RWPE1 (cell line): ENCODE measurements at regions of chr9 and their contacts with region 1.

Region 1: GRCh38 chr9:21789541-21790037 is 12.8 kb upstream of the MTAP start:
- DNase-seq: peak; percentile 82
- H3K27ac ChIP-seq: no peak overlapping the region
- CTCF ChIP-seq: peak; percentile 98

Region 2: GRCh38 chr9:21434202-21435014 is 355.2 kb before region 1 on chr9:
- CTCF ChIA-PET with region 1: interaction called, 11 read pairs
- POLR2A ChIA-PET with region 1: no interaction called
- DNase-seq: peak; percentile 38
- H3K27ac ChIP-seq: no peak overlapping the region
- CTCF ChIP-seq: peak; percentile 83

Region 3: DNA sequence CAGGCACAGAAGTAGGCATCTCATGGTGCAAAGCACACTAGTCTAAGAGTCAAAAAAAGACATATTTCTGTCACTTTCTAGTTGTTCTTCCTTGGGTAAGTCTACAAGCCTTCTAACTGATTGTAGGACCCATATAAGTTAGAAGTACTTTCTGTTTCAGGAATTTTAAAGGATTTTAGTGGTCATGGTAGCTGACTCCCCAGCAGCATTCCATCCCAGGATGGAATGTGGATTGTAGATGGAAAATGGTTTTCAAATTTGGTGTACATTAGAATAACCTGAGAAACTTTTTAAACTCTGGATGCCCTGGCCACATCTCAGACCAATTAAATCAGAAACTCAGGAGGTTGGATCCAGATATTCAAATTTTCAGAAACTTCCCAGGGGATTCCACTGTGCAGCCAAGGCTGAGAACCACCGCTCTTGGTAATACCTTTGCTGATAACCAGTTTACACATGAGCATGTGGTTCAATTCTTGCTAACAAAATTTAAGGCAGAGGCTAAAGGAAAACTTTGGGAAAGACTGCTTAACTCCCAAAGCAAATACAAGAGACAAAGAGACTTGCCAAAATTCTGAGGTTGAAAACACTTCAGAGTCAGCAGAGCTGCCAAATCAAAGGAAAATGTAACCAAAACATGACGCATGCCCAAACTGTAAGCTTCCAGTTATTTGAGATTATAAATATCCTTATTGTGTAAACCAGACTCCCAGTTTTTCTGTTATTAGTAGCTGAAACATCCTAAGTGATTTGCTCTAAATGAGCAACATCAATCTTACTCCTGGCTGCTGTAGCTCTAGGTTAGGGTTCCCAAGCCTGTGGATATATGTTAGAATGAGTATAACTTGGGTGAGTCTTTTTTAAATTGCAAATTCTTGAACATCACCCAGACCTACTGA is 132.6 kb before region 1 on chr9:
- CTCF ChIA-PET with region 1: no interaction called
- POLR2A ChIA-PET with region 1: no interaction called
- DNase-seq: no peak
- H3K27ac ChIP-seq: no peak overlapping the region
- CTCF ChIP-seq: no peak

Region 4: DNA sequence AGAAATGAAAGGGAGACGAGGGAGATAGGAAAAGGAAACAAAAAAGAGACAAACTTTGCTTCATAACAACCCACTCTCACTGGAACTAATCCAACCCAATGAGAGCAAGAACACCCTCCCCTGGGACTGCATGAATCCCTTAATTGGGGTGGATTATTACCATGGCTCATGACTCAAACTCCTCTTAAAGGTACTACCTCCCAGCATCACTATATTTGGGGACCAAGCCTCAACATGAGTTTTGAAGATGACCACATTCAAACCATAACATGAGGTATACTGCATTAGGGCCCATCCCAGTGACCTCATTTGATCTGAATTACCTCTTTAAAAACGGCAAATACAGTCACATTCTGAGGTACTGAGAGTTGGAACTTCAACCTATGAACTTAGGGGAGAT is 20.8 kb after region 1 on chr9:
- CTCF ChIA-PET with region 1: no interaction called
- POLR2A ChIA-PET with region 1: no interaction called
- DNase-seq: peak; percentile 25
- H3K27ac ChIP-seq: peak overlapping the region; percentile 77
- CTCF ChIP-seq: no peak

Region 5: GRCh38 chr9:21862871-21863270 is 73.3 kb after region 1 on chr9:
- CTCF ChIA-PET with region 1: no interaction called
- POLR2A ChIA-PET with region 1: no interaction called
- DNase-seq: no peak
- H3K27ac ChIP-seq: no peak overlapping the region
- CTCF ChIP-seq: no peak